ENCODE measurements at regions of chr3 and their contacts with region 1.

Region 1: GRCh38 chr3:51311055-51311454 is 74.0 kb upstream of the MANF start:
- DNase-seq: peak; percentile 31
- H3K4me3 ChIP-seq: no peak overlapping the region
- H3K27ac ChIP-seq: no peak overlapping the region
- H3K4me1 ChIP-seq: no peaks in the 10 kb centered on the region
- H3K27me3 ChIP-seq: no peaks in the 10 kb centered on the region
- CTCF ChIP-seq: peak in 1 of 2 donors; percentile 32
- POLR2A ChIP-seq: no peak

Region 2: GRCh38 chr3:50971487-50971924 is 339.5 kb before region 1 on chr3:
- CTCF ChIA-PET with region 1: interaction called, 10 read pairs
- POLR2A ChIA-PET with region 1: no interaction called
- dilution Hi-C with region 1: no loop called
- intact Hi-C with region 1: no loop called
- DNase-seq: peak; percentile 45
- H3K4me3 ChIP-seq: no peak overlapping the region
- H3K27ac ChIP-seq: no peak overlapping the region
- H3K4me1 ChIP-seq: no peaks in the 10 kb centered on the region
- H3K27me3 ChIP-seq: no peaks in the 10 kb centered on the region
- CTCF ChIP-seq: peak; percentile 75 to 78
- POLR2A ChIP-seq: no peak

Measured in endothelial cell of umbilical vein (primary cell).